ENCODE measurements at regions of chr7 and their contacts with region 1.

Region 1: DNA sequence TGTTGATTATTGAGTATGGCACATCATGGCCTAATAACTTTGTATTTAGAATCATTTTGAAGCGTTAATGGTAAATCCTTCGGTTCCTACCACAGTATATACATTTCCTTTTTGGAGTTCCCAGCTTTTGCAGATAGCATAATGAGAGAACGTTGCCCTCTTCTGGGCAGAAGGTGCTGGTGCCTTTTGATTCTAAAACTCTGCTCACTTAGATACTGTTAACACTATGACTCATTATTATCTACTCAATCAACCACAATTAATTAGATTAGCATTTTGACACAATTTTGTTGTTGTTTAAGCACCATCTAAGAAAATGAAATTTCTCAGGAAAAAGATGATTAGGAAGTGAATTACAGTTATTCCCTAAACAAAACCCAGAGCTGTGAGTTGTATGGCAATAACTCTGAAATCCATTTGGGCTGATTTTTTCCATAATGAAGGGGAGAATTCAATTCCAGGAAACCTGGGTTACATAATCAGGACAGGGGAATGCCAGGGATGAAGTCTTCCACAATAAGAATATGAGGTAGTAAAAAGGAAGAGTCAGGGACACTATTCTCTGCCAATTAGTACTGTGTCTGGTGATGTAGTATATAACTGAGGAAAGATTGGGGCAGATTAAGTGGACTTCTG is 11.5 kb upstream of the DLD start:
- DNase-seq: peak; percentile 55
- H3K4me3 ChIP-seq: no peak overlapping the region
- H3K27ac ChIP-seq: no peak overlapping the region
- H3K4me1 ChIP-seq: peaks cover 6% of the 10 kb centered on the region
- H3K27me3 ChIP-seq: no peaks in the 10 kb centered on the region
- CTCF ChIP-seq: peak; percentile 82 to 90

Region 2: GRCh38 chr7:107150375-107151073 is 729.0 kb before region 1 on chr7:
- CTCF ChIA-PET with region 1: interaction called, 6 read pairs
- dilution Hi-C with region 1: no loop called
- in situ Hi-C with region 1: no loop called
- intact Hi-C with region 1: loop called (anchors 1 kb)
- DNase-seq: peak; percentile 44
- H3K4me3 ChIP-seq: no peak overlapping the region
- H3K27ac ChIP-seq: no peak overlapping the region
- H3K4me1 ChIP-seq: peaks cover 13% of the 10 kb centered on the region
- H3K27me3 ChIP-seq: no peaks in the 10 kb centered on the region
- CTCF ChIP-seq: peak; percentile 50 to 58

Region 3: DNA sequence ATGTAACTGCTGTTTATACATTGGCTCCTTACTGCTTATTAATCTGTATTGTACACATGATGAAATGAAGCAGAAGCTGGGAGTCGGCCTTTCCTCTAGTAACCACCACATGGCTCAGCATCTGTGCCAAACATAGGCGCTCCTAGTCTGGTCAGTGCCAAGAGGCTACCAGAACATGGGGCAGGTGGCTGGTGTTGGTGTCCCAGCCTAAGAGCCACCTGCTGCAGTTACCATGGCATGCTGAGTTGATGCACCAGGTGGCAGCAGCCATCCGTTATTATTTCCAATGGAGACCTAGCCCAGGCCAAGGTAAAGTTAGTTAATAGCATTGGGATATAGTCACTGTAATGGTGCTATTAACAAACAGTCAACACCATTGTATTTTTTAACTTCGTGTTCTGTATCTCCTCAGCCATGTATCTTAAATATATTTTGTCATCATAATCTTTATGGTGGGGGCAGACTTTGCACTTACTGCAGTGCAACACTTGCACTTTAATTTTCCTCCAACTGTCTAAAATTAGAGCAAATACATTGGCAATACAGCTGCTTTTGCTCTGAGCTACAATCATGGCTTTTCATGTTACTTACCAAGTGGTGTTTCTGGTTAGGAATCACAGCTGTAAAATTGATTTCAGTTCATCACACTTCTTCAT is 677.6 kb before region 1 on chr7:
- CTCF ChIA-PET with region 1: no interaction called
- dilution Hi-C with region 1: no loop called
- in situ Hi-C with region 1: loop called in 1 of 2 experiments (anchors 25 kb)
- intact Hi-C with region 1: loop called (anchors 2 kb)
- DNase-seq: peak; percentile 37
- H3K4me3 ChIP-seq: no peak overlapping the region
- H3K27ac ChIP-seq: no peak overlapping the region
- H3K4me1 ChIP-seq: no peaks in the 10 kb centered on the region
- H3K27me3 ChIP-seq: no peaks in the 10 kb centered on the region
- CTCF ChIP-seq: peak; percentile 69 to 71

Region 4: DNA sequence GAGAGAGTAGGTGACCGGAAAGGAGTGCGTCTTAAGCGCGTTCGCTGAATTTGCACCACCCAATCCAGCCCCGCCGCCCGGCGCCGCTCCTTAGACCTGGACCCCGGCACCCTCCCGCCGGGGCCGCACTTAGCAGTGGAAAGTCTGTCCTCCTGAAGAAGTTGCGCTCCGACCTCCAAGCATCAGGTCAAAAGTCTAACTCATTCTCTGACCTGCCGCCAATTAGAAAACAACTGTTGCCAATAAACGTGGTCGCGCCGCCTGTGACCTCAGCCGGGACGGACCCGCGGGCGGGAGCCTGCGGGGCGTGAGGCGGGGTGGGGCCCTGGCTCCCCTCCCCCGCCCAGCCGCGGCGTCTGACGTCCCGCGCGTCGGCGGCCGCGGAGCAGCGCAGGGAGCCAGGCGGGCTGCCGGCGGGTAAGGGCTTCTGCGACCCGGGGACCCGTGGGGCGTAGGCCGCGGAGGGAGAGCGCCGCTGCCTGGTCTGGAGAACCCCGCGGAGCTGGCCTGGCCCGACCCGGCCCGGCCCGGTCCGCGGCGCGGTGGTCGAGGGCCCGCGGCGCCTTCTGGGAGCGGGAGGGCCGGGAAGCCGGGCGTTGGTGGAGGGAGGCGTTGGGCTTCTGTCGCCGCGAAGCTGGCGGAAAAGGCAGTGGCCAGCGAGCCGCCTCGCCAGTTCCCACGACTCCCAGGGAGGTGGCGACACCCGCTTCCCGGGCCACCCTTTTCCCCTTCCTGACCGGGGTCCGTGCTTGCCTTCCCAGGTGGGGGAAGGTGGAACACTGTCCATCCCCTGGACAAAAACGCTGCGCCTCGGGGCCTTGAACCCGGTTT is 299.4 kb before region 1 on chr7 and contains the start of gene BCAP29:
- CTCF ChIA-PET with region 1: no interaction called
- dilution Hi-C with region 1: no loop called
- in situ Hi-C with region 1: no loop called
- intact Hi-C with region 1: loop called (anchors 10 kb)
- DNase-seq: peak; percentile 65
- H3K4me3 ChIP-seq: peak within 1 kb of the TSS; percentile 68 to 88 (median 82)
- H3K27ac ChIP-seq: peak within 1 kb of the TSS; percentile 75
- H3K4me1 ChIP-seq: peaks cover 9% of the 10 kb centered on the region
- H3K27me3 ChIP-seq: no peaks in the 10 kb centered on the region
- CTCF ChIP-seq: peak in 1 of 2 donors; percentile 38
- total RNA-seq, gene BCAP29: 92.1 to 129 TPM

Region 5: GRCh38 chr7:107816011-107816566 is 63.4 kb before region 1 on chr7:
- CTCF ChIA-PET with region 1: no interaction called
- dilution Hi-C with region 1: no loop called
- in situ Hi-C with region 1: no loop called
- intact Hi-C with region 1: no loop called
- DNase-seq: no peak
- H3K4me3 ChIP-seq: no peak overlapping the region
- H3K27ac ChIP-seq: no peak overlapping the region
- H3K4me1 ChIP-seq: no peaks in the 10 kb centered on the region
- H3K27me3 ChIP-seq: no peaks in the 10 kb centered on the region
- CTCF ChIP-seq: no peak

Region 6: DNA sequence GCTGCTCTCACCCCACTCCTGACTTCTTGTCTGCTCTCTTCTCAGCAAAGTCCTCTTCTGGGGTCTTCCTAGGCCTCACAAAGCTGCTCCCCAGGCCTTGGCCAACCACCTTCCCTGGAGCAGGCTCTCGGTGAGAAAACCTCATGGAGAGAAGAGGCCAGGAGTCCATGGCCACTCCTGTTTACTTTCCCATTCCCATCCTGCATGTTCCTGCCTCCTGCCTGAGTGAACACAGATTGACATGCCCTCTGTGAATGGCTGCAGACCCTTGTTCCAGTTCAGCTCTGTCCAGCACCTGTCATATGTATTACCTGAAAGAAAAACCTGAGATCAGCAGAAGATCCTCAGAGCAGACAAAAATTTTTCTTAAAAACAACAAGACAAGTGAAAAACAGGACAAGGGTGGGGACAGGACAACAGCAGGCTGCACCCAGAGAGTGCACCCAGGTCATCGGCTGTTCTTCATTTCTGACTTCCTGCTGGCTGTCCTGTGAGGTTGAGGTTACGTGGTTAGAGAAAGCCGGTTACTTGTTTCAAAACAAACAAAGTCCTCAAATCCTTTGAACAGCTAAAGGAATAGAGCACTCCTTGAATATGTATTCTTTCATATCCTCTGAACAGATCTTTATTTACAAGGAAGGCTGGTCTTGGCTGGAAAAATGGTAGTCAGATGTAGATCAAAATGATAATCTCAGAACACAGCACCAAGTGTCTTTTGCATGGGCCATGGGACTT is 22.5 kb before region 1 on chr7:
- CTCF ChIA-PET with region 1: no interaction called
- dilution Hi-C with region 1: no loop called
- in situ Hi-C with region 1: no loop called
- intact Hi-C with region 1: no loop called
- DNase-seq: no peak
- H3K4me3 ChIP-seq: no peak overlapping the region
- H3K27ac ChIP-seq: no peak overlapping the region
- H3K4me1 ChIP-seq: peaks cover 9% of the 10 kb centered on the region
- H3K27me3 ChIP-seq: no peaks in the 10 kb centered on the region
- CTCF ChIP-seq: no peak

Region 7: GRCh38 chr7:107982918-107983389 is 103.4 kb after region 1 on chr7:
- CTCF ChIA-PET with region 1: no interaction called
- dilution Hi-C with region 1: no loop called
- in situ Hi-C with region 1: no loop called
- intact Hi-C with region 1: no loop called
- DNase-seq: no peak
- H3K4me3 ChIP-seq: no peak overlapping the region
- H3K27ac ChIP-seq: no peak overlapping the region
- H3K4me1 ChIP-seq: no peaks in the 10 kb centered on the region
- H3K27me3 ChIP-seq: no peaks in the 10 kb centered on the region
- CTCF ChIP-seq: peak; percentile 11 to 21